Vagina (tissue), 2 donors: ENCODE measurements at regions of chr4 and their contacts with region 1.

Region 1: DNA sequence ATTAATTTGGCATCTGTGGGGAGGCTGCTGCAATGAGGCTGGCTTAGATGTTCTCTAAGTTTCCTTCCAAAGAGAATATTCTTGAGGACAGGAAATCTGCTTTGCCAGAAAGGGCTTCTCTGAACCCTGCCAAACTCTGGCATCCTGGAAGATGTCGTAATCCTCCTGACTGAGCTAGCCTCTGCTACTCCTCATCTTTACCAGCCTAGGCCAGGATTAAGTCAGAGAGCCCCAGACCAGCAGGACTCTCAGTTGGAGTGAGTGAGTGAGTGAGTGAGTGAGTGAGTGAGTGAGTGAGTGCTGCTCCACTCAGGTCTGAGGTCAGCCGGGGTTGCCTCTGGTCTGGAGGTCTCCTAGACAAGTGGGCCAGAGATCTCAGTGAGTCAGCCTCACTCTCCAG is 104.9 kb upstream of the SOD3 start:
- DNase-seq: no peak
- H3K4me3 ChIP-seq: no peak overlapping the region
- H3K27ac ChIP-seq: no peak overlapping the region
- H3K4me1 ChIP-seq: no peaks in the 10 kb centered on the region
- H3K27me3 ChIP-seq: no peaks in the 10 kb centered on the region
- CTCF ChIP-seq: no peak
- POLR2A ChIP-seq: no peak

Region 2: DNA sequence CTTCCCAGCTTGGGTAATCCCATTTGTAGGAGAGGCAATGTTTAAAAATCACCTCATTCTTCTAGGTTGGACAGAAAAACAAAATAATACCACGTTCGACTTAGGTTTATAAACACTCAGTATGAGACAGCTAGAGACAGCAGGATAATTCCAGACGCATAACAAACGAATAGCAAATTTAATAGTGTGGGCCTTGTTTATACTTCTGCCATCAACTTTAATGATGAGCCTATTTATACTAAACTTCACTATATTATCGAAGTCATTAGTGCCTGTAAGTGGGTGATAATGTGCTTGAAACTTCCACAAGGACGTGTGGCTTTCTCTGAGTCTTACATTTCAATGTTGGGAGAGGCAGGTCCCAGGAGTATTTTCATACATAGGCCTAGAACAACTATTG is 544.8 kb before region 1 on chr4:
- intact Hi-C with region 1: loop called (anchors 5 kb)
- DNase-seq: no peak
- H3K4me3 ChIP-seq: no peak overlapping the region
- H3K27ac ChIP-seq: no peak overlapping the region
- H3K4me1 ChIP-seq: no peaks in the 10 kb centered on the region
- H3K27me3 ChIP-seq: no peaks in the 10 kb centered on the region
- CTCF ChIP-seq: no peak
- POLR2A ChIP-seq: no peak

Region 3: GRCh38 chr4:24799544-24800324 is 109.3 kb after region 1 on chr4:
- intact Hi-C with region 1: no loop called
- DNase-seq: no peak
- H3K4me3 ChIP-seq: peak overlapping the region; percentile 27 to 33
- H3K27ac ChIP-seq: peak overlapping the region; percentile 62
- H3K4me1 ChIP-seq: peaks cover 44% of the 10 kb centered on the region
- H3K27me3 ChIP-seq: no peaks in the 10 kb centered on the region
- CTCF ChIP-seq: no peak
- POLR2A ChIP-seq: no peak